HEK293T (cell line): ENCODE measurements at regions of chr12 and their contacts with region 1.

Region 1: DNA sequence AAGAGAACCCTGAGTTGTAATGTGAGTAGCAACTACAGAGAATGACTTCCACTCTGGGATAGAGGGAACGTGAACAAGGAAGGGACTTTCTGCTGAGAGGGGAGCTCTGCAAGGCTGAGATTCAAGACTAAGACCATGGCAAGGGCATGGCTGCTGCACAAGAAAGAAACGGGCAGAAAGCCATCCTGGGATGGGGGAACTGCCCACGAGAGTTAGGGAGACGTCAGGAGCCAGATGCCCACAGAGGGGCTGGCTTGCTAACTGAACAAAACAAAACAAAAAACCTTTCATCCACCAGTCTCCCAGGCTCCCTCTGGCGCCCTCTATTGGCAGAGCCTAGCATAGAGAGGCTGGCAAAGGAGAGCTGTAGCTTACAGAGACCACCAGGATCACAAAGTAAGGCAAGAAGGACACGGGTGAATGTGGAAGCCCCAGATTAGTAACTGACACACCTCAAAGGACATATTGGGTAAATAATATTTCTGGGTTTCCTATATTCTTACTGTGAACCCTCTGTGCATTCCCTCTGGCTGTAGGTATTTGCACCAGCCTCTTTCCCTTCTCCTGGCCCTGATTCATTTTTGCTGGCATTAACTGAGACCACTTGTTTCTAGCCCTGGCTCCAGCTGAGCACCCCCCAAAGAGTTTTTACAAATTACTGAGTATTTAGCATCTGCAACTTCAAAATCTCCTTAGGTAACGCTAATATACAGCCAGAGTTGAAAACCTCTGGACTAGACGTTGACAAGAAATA is 338.3 kb downstream of the EMP1 start:
- DNase-seq: peak; percentile 66

Region 2: GRCh38 chr12:13255792-13256691 is 278.8 kb before region 1 on chr12:
- CTCF ChIA-PET with region 1: interaction called, 21 read pairs
- POLR2A ChIA-PET with region 1: no interaction called
- DNase-seq: peak; percentile 94

Region 3: DNA sequence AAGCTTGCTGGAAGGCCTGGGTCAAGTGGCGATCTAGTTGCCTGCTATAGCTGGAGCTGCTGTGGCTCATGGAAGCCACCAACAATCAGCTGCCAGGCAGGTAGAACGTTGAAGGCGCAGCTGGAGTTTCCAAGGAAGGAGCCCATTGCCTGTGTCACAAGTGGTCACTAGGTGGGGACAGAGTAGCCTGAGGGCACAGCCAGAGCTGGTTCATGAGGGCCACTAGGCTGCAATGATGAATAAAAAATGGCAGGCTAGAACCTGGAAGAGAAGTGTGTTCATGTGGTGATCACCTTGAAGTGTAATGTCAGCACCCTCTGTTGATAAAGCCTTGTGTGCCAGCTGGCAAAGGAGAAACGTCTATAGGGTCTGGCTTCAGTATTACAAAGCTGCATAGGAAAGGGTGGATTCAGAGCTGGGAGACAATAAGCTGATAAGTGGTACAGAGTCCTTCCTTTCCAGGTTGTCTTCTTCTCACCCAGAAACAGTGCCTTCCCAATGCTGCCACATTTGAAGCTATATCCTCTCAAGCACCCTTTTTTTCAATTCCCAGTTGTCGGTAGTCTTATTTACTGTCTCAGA is 172.5 kb before region 1 on chr12:
- CTCF ChIA-PET with region 1: interaction called, 20 read pairs
- POLR2A ChIA-PET with region 1: no interaction called
- DNase-seq: peak; percentile 71

Region 4: DNA sequence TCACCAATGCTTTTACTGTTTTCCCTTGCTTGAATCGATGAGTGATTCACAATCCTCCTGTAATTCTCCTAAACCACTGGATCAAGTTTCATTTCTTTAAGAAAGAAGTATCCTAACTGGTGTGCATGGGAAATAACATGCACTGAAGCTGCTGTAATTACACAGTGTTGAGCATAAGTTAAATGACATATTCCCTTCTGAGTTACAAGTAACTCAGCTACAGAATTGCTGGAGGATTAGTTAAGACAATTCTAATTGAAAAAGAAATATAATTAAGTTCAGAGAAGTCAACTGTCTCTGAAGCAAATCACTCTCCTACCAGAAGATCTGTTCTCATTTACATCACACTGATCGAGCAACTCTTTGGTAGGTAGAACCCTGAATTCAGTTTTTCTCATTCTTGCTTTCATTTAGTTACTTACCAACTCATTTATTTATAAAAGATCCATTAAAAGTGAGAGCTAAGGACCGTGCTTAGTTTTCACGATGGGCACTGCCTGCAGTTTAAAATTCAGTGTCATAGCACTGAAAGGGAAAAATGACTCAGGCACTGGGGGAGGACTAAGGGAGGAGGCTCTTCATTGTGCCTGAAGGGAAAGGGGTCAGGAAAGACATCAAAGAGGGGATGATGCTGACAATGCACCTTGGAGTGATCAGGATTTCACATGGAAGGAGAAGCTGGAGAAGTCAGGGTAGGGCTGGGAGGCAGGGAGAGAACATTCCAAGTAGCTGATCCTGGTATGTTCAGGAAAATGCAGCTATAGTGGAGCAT is 11.1 kb before region 1 on chr12:
- CTCF ChIA-PET with region 1: interaction called, 16 read pairs
- POLR2A ChIA-PET with region 1: no interaction called
- DNase-seq: no peak

Region 5: GRCh38 chr12:13546231-13546630 is 11.4 kb after region 1 on chr12:
- CTCF ChIA-PET with region 1: interaction called, 13 read pairs
- POLR2A ChIA-PET with region 1: no interaction called
- DNase-seq: no peak